Activated CD4-positive, alpha-beta T cell treated with anti-CD3 and anti-CD28 coated beads, Interleukin-2, amount 10 ng/mL, durations not matched to agents 24 days and 14 days (primary cell): ENCODE measurements at regions of chr6 and their contacts with region 1.

Region 1: DNA sequence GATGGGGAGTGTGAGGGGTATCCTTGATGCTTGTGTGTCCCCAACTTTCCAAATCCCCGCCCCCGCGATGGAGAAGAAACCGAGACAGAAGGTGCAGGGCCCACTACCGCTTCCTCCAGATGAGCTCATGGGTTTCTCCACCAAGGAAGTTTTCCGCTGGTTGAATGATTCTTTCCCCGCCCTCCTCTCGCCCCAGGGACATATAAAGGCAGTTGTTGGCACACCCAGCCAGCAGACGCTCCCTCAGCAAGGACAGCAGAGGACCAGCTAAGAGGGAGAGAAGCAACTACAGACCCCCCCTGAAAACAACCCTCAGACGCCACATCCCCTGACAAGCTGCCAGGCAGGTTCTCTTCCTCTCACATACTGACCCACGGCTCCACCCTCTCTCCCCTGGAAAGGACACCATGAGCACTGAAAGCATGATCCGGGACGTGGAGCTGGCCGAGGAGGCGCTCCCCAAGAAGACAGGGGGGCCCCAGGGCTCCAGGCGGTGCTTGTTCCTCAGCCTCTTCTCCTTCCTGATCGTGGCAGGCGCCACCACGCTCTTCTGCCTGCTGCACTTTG is at the start of gene TNF:
- DNase-seq: peak; percentile 96
- H3K4me3 Mint-ChIP-seq: peak within 1 kb of the TSS; percentile 99
- H3K27ac Mint-ChIP-seq: peak within 1 kb of the TSS; percentile 99
- H3K4me1 Mint-ChIP-seq: peaks cover 78% of the 10 kb centered on the region
- H3K27me3 Mint-ChIP-seq: no peaks in the 10 kb centered on the region
- total RNA-seq, gene TNF: 294 and 303 TPM in 2 replicates

Region 2: DNA sequence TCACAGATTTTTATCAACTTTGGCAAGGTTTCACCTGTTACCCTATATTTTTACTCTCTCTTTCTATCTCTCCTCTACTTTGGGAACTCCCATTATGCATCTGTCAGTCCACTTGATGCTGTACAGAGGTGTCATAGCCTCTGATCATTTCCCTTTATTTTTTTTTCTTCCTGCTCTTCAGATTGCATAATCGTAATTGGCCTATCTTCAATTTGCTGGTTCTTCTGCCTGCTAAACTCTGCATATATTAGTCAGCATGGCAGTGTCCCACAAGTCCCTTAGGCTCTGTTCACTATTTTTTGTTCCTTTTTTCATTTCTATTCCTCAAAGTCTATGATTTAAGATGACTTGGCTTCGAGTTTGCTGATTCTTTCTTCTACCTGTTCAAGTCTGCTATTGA is 122.2 kb before region 1 on chr6:
- intact Hi-C with region 1: no loop called
- DNase-seq: no peak
- H3K4me3 Mint-ChIP-seq: no peak overlapping the region
- H3K27ac Mint-ChIP-seq: no peak overlapping the region
- H3K4me1 Mint-ChIP-seq: no peaks in the 10 kb centered on the region
- H3K27me3 Mint-ChIP-seq: peaks cover 49% of the 10 kb centered on the region

Region 3: GRCh38 chr6:31559958-31560696 is 15.3 kb before region 1 on chr6:
- intact Hi-C with region 1: loop called (anchors 2 kb)
- DNase-seq: peak; percentile 85
- H3K4me3 Mint-ChIP-seq: peak overlapping the region; percentile 78
- H3K27ac Mint-ChIP-seq: peak overlapping the region; percentile 86
- H3K4me1 Mint-ChIP-seq: peaks cover 60% of the 10 kb centered on the region
- H3K27me3 Mint-ChIP-seq: peaks cover 19% of the 10 kb centered on the region

Region 4: DNA sequence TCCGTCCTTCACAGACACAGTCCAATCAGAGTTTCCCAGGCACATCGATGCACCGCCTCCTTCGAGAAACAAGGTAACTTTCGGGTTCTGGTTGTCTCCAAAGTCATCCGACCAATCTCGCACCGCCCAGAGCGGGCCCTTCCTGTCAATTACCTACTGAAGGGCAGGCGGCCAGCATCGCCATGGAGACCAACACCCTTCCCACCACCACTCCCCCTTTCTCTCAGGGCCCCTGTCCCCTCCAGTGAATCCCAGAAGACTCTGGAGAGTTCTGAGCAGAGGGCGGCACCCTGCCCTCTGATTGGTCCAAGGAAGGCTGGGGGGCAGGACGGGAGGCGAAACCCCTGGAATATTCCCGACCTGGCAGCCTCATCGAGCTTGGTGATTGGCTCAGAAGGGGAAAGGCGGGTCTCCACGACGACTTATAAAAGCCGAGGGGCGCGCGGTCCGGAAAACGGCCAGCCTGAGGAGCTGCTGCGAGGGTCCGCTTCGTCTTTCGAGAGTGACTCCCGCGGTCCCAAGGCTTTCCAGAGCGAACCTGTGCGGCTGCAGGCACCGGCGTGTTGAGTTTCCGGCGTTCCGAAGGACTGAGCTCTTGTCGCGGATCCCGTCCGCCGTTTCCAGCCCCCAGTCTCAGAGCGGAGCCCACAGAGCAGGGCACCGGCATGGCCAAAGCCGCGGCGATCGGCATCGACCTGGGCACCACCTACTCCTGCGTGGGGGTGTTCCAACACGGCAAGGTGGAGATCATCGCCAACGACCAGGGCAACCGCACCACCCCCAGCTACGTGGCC is 252.1 kb after region 1 on chr6 and contains the start of gene HSPA1B:
- intact Hi-C with region 1: loop called (anchors 10 kb)
- DNase-seq: peak; percentile 98
- H3K4me3 Mint-ChIP-seq: peak within 1 kb of the TSS; percentile 87
- H3K27ac Mint-ChIP-seq: peak within 1 kb of the TSS; percentile 93
- H3K4me1 Mint-ChIP-seq: peaks cover 37% of the 10 kb centered on the region
- H3K27me3 Mint-ChIP-seq: no peaks in the 10 kb centered on the region
- total RNA-seq, gene HSPA1B: 156 and 161 TPM in 2 replicates